Sigmoid colon (tissue), 7 donors: ENCODE measurements at regions of chr14 and their contacts with region 1.

Region 1: DNA sequence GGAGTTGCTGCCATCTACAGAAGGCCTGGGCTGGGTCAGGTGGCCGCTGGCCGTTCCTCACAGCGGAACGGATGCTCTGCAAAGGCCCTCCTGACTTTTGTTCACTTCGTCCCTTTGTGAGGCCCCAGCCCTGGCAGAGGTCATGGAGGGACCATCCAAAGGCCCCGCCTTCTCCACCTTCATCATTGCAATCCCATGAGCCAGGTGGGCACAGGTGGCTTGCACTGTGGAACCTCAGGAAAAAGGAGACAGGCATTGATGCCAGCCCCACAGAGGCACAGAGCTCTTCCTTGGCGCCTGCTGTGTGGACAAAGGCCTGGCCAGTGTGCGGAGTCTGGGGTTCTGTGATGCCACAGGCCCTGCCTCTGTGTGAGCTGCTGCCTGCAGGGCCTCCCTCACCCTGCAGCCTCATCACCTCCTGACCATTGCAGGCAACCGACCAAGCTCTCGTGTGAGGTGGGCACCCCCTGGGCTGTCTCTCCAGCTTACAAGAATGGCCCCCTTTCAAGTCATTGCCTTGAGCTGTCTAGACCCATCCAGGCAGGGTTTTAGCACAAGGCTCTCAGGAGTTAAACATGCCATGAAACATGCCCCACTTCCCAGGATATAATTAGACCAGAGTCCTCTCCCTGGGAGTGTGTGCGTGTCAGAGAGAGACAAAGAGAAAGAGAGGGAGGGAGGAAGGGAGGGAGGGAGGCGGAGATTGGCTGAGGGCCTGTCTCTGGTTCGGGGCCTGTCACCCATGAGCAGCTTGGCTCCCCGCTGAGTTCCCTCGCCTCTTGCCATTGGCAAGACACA is 19.3 kb downstream of the NFKBIA start:
- DNase-seq: peak; percentile 98
- H3K4me3 ChIP-seq: peak overlapping the region in 3 of 4 donors; percentile 10 to 33 (median 17)
- H3K27ac ChIP-seq: peak overlapping the region; percentile 91 to 97 (median 94)
- H3K4me1 ChIP-seq: peaks cover 5 to 44% (median 43%) of the 10 kb centered on the region in 4 donors
- H3K27me3 ChIP-seq: no peaks in the 10 kb centered on the region
- CTCF ChIP-seq: no peak
- EP300 ChIP-seq: peak in 2 of 4 donors; percentile 60 to 86
- POLR2A ChIP-seq: no peak

Region 2: GRCh38 chr14:35292051-35292769 is 93.0 kb before region 1 on chr14 and contains the start of gene PSMA6:
- intact Hi-C with region 1: loop called (anchors 5 kb)
- DNase-seq: peak; percentile 99
- H3K4me3 ChIP-seq: peak within 1 kb of the TSS; percentile 77 to 89 (median 80)
- H3K27ac ChIP-seq: peak within 1 kb of the TSS; percentile 89 to 96 (median 92)
- H3K4me1 ChIP-seq: peaks cover 0 to 49% (median 40%) of the 10 kb centered on the region in 4 donors
- H3K27me3 ChIP-seq: no peaks in the 10 kb centered on the region
- CTCF ChIP-seq: no peak
- EP300 ChIP-seq: peak in 1 of 4 donors; percentile 70
- POLR2A ChIP-seq: peak; percentile 81 to 86
- total RNA-seq, gene PSMA6: 104 to 203 (median 169) TPM

Region 3: DNA sequence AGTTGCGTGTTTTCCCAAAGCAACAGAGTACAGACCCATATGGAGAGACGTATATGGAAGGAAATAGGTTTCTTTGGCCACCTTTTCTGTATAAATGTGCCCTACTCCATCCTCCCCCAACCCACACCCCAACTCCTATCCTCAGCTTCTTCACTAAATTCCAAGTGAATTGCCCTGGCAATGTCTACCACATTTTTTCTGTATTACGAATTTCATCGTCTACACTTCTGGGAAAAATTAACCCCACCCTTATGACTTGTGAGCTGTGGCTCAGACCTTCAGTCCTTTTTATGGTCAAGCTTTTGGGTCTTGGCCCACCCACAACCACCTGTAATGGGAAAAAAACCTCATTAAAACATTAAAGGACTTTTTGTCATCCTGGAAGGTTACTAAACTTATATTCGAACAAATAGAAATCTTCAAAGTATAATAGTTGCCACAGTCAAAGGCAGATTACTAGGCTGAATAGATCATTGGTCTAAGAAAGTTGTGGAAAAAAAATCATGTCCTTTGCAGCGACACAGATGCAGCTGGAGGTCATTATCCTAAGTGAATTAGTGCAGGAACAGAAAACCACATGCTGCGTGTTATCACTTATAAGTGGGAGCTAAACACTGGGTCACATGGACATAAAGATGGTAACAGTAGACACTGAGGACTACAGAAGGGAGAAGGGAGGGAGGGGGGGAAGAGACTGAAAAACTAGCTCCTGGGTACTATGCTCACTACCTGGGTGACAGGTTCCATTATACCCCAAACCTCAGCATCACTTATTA is 35.0 kb after region 1 on chr14:
- intact Hi-C with region 1: no loop called
- DNase-seq: no peak
- H3K4me3 ChIP-seq: no peak overlapping the region
- H3K27ac ChIP-seq: peak overlapping the region in 2 of 4 donors; percentile 48 to 64
- H3K4me1 ChIP-seq: peaks cover 0 to 32% (median 20%) of the 10 kb centered on the region in 4 donors
- H3K27me3 ChIP-seq: no peaks in the 10 kb centered on the region
- CTCF ChIP-seq: no peak
- EP300 ChIP-seq: no peak
- POLR2A ChIP-seq: no peak

Region 4: DNA sequence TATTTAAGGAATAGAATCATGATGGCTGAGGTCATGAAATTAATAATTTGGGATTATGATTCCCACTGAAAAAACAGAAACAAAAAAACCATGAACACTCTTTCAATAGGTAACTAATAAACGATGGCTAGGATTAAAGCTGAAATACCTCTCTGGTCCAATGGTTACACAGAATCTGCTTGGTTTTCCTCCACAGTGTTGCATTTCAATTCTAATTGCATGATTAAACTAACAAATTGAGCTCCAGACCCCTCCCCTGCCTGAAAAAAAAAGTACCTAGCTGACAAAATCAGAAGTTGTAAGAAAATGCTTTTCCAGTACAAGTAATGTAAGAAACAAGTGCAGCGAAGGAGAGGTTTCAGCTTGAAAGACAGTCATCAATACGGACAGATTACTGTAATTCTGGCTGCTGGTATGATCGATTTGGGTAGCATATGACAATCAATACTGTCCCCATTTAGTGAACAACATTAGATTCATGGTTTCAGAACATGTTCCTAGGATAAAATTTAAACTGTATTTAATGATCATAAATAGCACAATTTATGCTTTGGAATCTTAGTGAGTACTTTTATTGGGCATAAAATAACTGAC is 180.7 kb after region 1 on chr14:
- intact Hi-C with region 1: no loop called
- DNase-seq: no peak
- H3K4me3 ChIP-seq: no peak overlapping the region
- H3K27ac ChIP-seq: no peak overlapping the region
- H3K4me1 ChIP-seq: no peaks in the 10 kb centered on the region
- H3K27me3 ChIP-seq: no peaks in the 10 kb centered on the region
- CTCF ChIP-seq: no peak
- EP300 ChIP-seq: no peak
- POLR2A ChIP-seq: no peak

Region 5: GRCh38 chr14:36626151-36626550 is 1240.9 kb after region 1 on chr14:
- intact Hi-C with region 1: no loop called
- DNase-seq: no peak
- H3K4me3 ChIP-seq: no peak overlapping the region
- H3K27ac ChIP-seq: no peak overlapping the region
- H3K4me1 ChIP-seq: no peaks in the 10 kb centered on the region
- H3K27me3 ChIP-seq: peaks cover 0 to 38% (median 0%) of the 10 kb centered on the region in 3 donors
- CTCF ChIP-seq: no peak
- EP300 ChIP-seq: no peak
- POLR2A ChIP-seq: no peak